A673 (cell line): ENCODE measurements at regions of chr13 and their contacts with region 1.

Region 1: GRCh38 chr13:73835138-73835721 is 299.0 kb downstream of the KLF12 start:
- DNase-seq: peak; percentile 72
- H3K4me3 ChIP-seq: no peak overlapping the region
- H3K27ac ChIP-seq: no peak overlapping the region
- H3K4me1 ChIP-seq: peaks cover 44% of the 10 kb centered on the region
- H3K27me3 ChIP-seq: no peaks in the 10 kb centered on the region
- CTCF ChIP-seq: peak; percentile 73

Region 2: GRCh38 chr13:73849292-73849691 is 14.1 kb after region 1 on chr13:
- CTCF ChIA-PET with region 1: no interaction called
- POLR2A ChIA-PET with region 1: no interaction called
- intact Hi-C with region 1: no loop called
- DNase-seq: peak; percentile 79
- H3K4me3 ChIP-seq: no peak overlapping the region
- H3K27ac ChIP-seq: no peak overlapping the region
- H3K4me1 ChIP-seq: peaks cover 38% of the 10 kb centered on the region
- H3K27me3 ChIP-seq: no peaks in the 10 kb centered on the region
- CTCF ChIP-seq: peak; percentile 68

Region 3: DNA sequence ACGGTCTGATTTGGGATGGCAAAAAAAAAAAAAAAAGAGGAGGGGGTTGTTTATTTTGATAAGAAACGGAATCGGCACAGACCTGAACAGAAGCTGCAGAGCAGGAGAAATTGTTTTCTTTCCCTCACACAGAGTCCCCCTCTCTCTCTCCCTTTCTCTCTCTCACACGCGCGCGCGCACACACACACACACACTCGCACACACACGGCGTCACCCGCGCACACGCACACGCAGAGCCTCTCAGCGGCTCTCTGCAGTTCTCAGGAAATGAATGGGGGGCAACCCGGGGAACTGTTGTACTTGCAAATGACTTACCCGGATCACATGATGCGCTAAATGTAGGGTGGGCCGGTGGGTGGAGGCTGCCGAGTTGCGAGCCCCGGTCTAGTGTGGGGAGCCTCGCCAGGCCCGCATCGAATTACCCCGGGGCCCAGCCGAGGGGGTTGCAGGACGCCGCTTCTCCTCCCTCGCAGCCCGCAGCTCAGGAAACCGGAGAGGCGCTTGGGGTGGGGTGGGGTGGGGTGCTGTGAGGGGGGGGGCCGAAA is 298.5 kb after region 1 on chr13:
- CTCF ChIA-PET with region 1: no interaction called
- POLR2A ChIA-PET with region 1: no interaction called
- intact Hi-C with region 1: loop called (anchors 5 kb)
- DNase-seq: peak; percentile 95
- H3K4me3 ChIP-seq: peak overlapping the region; percentile 84
- H3K27ac ChIP-seq: peak overlapping the region; percentile 83
- H3K4me1 ChIP-seq: peaks cover 24% of the 10 kb centered on the region
- H3K27me3 ChIP-seq: no peaks in the 10 kb centered on the region
- CTCF ChIP-seq: no peak

Region 4: GRCh38 chr13:74287724-74288169 is 452.5 kb after region 1 on chr13:
- CTCF ChIA-PET with region 1: no interaction called
- POLR2A ChIA-PET with region 1: no interaction called
- intact Hi-C with region 1: loop called (anchors 2 kb)
- DNase-seq: peak; percentile 86
- H3K4me3 ChIP-seq: peak overlapping the region; percentile 35
- H3K27ac ChIP-seq: no peak overlapping the region
- H3K4me1 ChIP-seq: peaks cover 38% of the 10 kb centered on the region
- H3K27me3 ChIP-seq: no peaks in the 10 kb centered on the region
- CTCF ChIP-seq: no peak

Region 5: DNA sequence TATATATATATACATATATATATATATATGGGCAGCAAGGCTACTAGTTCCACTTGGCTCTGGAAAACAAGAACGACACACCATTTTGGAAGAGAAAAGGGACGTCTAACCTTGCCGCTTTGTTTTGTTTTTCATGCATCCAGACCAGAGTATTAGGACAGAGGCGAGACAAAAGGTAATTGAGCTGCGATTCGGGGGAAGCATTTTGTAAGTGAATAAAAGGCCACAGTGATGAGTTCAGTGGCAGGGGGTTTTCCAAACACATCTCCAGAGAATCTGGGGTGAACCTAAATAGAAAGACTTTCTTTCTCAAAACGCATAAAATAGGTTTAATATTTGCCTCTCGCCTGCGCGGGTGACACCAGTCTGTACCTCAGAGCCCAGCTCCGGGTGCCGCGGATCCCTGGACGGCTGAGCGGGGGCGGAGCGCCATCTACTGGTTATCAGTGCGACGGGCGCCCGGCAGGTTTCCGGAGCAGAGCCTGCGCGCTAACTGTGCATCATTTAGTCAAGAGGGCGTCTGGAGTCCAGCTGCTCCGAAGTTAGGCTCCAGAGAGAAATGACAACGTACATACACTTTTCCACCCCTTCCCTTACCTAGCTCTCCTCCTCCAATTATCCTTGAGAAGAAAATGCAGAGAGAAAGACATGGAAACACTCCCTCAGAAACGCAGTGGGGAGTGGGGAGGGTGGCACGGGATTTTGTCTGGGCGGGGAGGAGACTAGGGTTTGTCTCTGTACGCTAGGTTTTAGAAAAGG is 1384.4 kb after region 1 on chr13:
- CTCF ChIA-PET with region 1: no interaction called
- POLR2A ChIA-PET with region 1: no interaction called
- intact Hi-C with region 1: loop called (anchors 5 kb)
- DNase-seq: peak; percentile 82
- H3K4me3 ChIP-seq: peak overlapping the region; percentile 28
- H3K27ac ChIP-seq: no peak overlapping the region
- H3K4me1 ChIP-seq: no peaks in the 10 kb centered on the region
- H3K27me3 ChIP-seq: no peaks in the 10 kb centered on the region
- CTCF ChIP-seq: peak; percentile 99